ENCODE measurements at regions of chr2 and their contacts with region 1.

Region 1: DNA sequence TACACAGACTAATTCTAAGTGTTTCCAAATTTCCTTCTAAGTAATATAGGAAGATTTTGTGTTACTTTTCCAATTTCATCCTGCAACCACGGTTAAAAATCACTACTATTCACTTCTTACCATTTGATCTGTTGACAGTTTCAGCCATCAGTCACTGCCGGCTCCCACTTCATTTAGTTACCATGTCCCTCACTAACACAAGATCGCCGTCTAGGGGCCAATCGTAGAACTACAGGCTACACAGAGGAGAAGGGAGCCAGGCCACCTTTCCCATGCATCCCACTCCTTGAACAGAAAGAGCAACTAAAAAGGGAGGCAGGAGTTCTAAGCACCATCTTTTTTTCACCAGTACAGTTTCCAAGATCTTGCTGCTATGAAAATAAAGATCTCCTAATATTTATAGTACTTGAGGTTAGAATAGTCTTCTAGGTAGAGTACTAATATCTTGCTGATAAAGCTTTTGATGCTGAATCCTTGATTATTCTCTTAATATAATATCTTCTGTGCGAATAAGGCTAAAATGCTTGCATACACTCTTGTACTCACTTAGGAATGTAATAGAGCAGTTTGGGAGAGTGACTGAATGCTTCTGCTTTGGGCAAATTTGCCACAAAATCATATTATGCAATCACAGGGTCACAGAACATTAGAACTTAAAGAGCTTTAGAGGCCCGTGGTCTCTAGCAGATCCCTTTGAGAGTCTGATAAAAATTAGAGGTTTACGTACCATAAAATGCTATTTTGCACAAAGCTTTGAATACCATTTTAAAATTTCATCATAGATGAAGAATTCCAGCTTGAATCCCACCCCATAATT is 39.5 kb upstream of the CYP1B1 start:
- DNase-seq: peak; percentile 76 to 78
- ATAC-seq: peak; percentile 51 to 92 (median 70)
- H3K4me3 ChIP-seq: no peak overlapping the region
- H3K27ac ChIP-seq: no peak overlapping the region
- H3K4me1 ChIP-seq: no peaks in the 10 kb centered on the region
- H3K27me3 ChIP-seq: no peaks in the 10 kb centered on the region
- CTCF ChIP-seq: peak; percentile 86

Region 2: GRCh38 chr2:38037757-38038621 is 77.4 kb before region 1 on chr2:
- intact Hi-C with region 1: loop called in 1 of 2 experiments (anchors 2 kb)
- DNase-seq: peak; percentile 42 to 75
- ATAC-seq: peak; percentile 81 to 96 (median 86)
- H3K4me3 ChIP-seq: peak overlapping the region; percentile 62
- H3K27ac ChIP-seq: peak overlapping the region; percentile 47
- H3K4me1 ChIP-seq: no peaks in the 10 kb centered on the region
- H3K27me3 ChIP-seq: peaks cover 0 to 11% (median 0%) of the 10 kb centered on the region in 3 donors
- CTCF ChIP-seq: peak; percentile 22

Measured in psoas muscle (tissue), 8 donors.